Activated CD4-positive, alpha-beta memory T cell treated with anti-CD3 and anti-CD28 coated beads, Interleukin-2, amount 10 ng/mL, durations not matched to agents 7 days and 5 days (primary cell): ENCODE measurements at regions of chr17 and their contacts with region 1.

Region 1: GRCh38 chr17:80219013-80219762 is 945 bp downstream of the SGSH start:
- DNase-seq: peak; percentile 95
- H3K4me3 Mint-ChIP-seq: peak overlapping the region; percentile 89
- H3K27ac Mint-ChIP-seq: peak overlapping the region; percentile 89
- H3K4me1 Mint-ChIP-seq: peaks cover 32% of the 10 kb centered on the region
- H3K27me3 Mint-ChIP-seq: peaks cover 1% of the 10 kb centered on the region

Region 2: GRCh38 chr17:80263253-80264204 is 44.3 kb after region 1 on chr17:
- CTCF ChIA-PET with region 1: no interaction called
- POLR2A ChIA-PET with region 1: interaction called, 51 read pairs
- DNase-seq: peak; percentile 94
- H3K4me3 Mint-ChIP-seq: peak overlapping the region; percentile 99
- H3K27ac Mint-ChIP-seq: peak overlapping the region; percentile 92
- H3K4me1 Mint-ChIP-seq: peaks cover 47% of the 10 kb centered on the region
- H3K27me3 Mint-ChIP-seq: no peaks in the 10 kb centered on the region